ENCODE measurements at regions of chr20 and their contacts with region 1.

Region 1: DNA sequence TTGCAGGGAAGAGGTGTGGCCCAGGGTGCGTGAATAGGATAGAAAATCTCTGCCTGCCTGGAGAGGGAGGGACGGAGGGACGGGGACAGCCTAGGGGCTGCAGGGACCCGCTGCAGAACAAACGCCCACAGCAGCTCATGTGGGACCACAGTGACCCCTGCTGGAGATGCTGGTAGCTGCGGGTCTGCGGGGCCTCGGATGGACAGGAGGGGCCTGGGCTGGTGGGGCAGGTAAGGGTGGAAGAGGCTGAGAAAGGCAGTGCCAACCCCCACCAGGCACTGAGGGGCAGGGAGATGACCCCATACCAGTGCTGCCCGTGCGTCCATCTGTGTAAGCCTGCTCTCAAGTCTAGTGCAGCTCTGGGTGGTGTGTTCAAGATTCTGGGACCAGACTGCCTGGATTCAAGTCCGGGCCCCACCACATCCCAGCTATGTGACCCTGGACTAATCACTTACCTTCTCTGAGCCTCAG is 39.4 kb downstream of the KIAA1755 start:
- DNase-seq: peak; percentile 69 to 82
- ATAC-seq: peak; percentile 69 to 87 (median 76)
- H3K4me3 ChIP-seq: no peak overlapping the region
- H3K27ac ChIP-seq: no peak overlapping the region
- H3K4me1 ChIP-seq: no peaks in the 10 kb centered on the region
- H3K27me3 ChIP-seq: no peaks in the 10 kb centered on the region
- CTCF ChIP-seq: peak; percentile 80

Region 2: GRCh38 chr20:37741055-37741454 is 480.1 kb before region 1 on chr20:
- intact Hi-C with region 1: loop called in 1 of 2 experiments (anchors 10 kb)
- DNase-seq: no peak
- ATAC-seq: peak; percentile 44 to 75 (median 61)
- H3K4me3 ChIP-seq: no peak overlapping the region
- H3K27ac ChIP-seq: no peak overlapping the region
- H3K4me1 ChIP-seq: peaks cover 21% of the 10 kb centered on the region
- H3K27me3 ChIP-seq: no peaks in the 10 kb centered on the region
- CTCF ChIP-seq: no peak

Region 3: GRCh38 chr20:37901654-37902503 is 319.3 kb before region 1 on chr20:
- intact Hi-C with region 1: loop called in 1 of 2 experiments (anchors 10 kb)
- DNase-seq: no peak
- ATAC-seq: peak; percentile 42 to 77 (median 64)
- H3K4me3 ChIP-seq: peak overlapping the region; percentile 62
- H3K27ac ChIP-seq: no peak overlapping the region
- H3K4me1 ChIP-seq: peaks cover 6% of the 10 kb centered on the region
- H3K27me3 ChIP-seq: peaks cover 0 to 57% (median 31%) of the 10 kb centered on the region in 3 donors
- CTCF ChIP-seq: peak; percentile 34

Region 4: GRCh38 chr20:38057351-38057972 is 163.7 kb before region 1 on chr20:
- intact Hi-C with region 1: loop called (anchors 1 to 5 kb)
- DNase-seq: peak; percentile 84 to 92
- ATAC-seq: peak; percentile 92 to 94 (median 94)
- H3K4me3 ChIP-seq: no peak overlapping the region
- H3K27ac ChIP-seq: peak overlapping the region; percentile 23
- H3K4me1 ChIP-seq: peaks cover 35% of the 10 kb centered on the region
- H3K27me3 ChIP-seq: no peaks in the 10 kb centered on the region
- CTCF ChIP-seq: peak; percentile 96

Region 5: DNA sequence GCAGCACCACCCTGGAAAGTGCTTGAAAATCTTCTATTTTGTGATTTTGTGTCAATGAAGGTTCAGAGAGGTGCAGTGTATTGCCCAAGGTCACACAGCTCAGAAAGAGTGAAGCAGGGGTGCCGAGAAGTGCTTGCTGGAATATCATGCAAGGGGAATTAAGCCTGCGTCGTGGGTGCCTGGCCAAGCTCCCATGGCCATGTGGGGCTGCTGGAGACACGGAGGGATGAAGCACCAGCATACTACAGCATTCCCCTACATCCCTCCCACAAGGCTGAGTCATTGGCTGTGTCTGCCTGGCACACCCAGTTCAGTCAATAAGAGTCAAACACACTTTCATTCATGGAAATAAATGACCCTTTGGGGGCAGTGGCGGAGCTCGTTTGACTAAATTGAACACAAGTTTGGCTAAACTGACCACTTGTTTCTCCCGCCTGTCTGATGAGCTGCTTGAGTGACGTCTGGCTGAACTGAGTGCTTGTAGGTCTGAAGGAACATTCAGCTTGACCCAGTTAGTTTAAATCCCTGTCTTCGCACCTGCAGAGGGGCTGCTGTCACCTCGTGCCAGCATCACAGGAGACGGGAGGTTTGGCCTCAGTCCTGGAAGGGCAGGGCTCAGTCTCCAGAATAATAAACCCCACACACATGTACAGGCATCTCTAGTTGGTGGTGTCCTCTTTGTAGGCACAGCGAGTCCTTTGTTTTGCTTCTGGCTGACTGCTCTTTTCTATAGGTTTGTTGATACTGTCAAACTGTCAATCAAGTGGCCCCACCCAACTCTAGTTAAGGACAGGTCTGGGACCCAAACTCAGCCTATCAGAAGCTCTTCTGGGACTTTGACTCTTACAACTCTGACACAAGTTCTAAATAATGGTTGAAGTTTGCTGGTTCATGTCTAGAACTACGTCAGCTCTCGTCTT is 47.7 kb before region 1 on chr20:
- intact Hi-C with region 1: loop called (anchors 5 kb)
- DNase-seq: peak in 1 of 2 donors; percentile 51
- ATAC-seq: peak in 1 of 4 donors; percentile 38
- H3K4me3 ChIP-seq: no peak overlapping the region
- H3K27ac ChIP-seq: no peak overlapping the region
- H3K4me1 ChIP-seq: peaks cover 6% of the 10 kb centered on the region
- H3K27me3 ChIP-seq: peaks cover 0 to 20% (median 0%) of the 10 kb centered on the region in 3 donors
- CTCF ChIP-seq: no peak

Measured in psoas muscle (tissue), 8 donors.